ENCODE measurements at regions of chr7 and their contacts with region 1.

Region 1: DNA sequence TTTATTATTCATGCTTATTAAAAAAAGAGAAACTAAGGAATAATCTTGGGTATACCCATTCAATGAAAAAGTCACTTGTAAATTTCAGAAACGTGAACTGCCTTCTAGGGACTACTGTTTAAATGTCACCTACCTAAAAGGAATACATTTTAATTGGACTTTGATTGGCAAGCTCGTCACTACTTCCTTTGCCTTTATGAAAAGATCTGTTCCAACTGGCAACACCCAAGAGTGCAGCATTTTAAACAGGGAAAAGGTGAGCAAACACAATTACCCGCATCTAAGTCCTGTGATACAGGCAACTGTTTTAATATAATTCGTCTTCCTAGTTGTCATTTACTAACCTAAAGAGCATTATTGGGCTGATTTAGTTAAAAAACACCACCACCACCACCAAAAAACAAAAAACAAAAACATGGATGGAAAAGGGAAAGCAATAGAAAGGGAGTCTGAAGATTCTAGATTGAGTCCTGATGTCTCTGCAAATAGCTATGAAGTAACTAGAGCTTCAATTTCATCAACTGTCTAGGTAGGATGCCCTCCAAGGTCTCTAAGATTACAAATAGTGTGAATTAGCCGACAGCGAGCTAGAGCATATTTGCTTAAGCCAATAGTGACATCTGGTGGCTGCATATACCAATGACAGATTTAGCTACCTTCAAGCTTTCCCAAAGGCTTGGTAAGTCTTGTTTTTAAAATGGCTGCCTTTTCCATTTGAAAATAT is 33.8 kb upstream of the ICA1 start:
- DNase-seq: peak in 7 of 9 donors; percentile 28 to 58 (median 44)
- ATAC-seq: peak; percentile 91
- H3K4me3 ChIP-seq: no peak overlapping the region
- H3K4me3 Mint-ChIP-seq: no peak overlapping the region
- H3K27ac ChIP-seq: no peak overlapping the region
- H3K27ac Mint-ChIP-seq: peak overlapping the region in 1 of 9 donors; percentile 48
- H3K4me1 ChIP-seq: no peaks in the 10 kb centered on the region
- H3K4me1 Mint-ChIP-seq: peaks cover 0 to 3% (median 0%) of the 10 kb centered on the region in 7 donors
- H3K27me3 ChIP-seq: no peaks in the 10 kb centered on the region
- H3K27me3 Mint-ChIP-seq: peaks cover 0 to 22% (median 12%) of the 10 kb centered on the region in 5 donors

Region 2: GRCh38 chr7:6516387-6516983 is 1779.3 kb before region 1 on chr7:
- CTCF ChIA-PET with region 1: no interaction called
- POLR2A ChIA-PET with region 1: no interaction called
- intact Hi-C with region 1: loop called in 1 of 2 experiments (anchors 2 kb)
- DNase-seq: peak; percentile 34 to 69 (median 56)
- ATAC-seq: peak; percentile 82
- H3K4me3 ChIP-seq: peak overlapping the region; percentile 64
- H3K4me3 Mint-ChIP-seq: peak overlapping the region; percentile 79 to 87 (median 84)
- H3K27ac ChIP-seq: no peak overlapping the region
- H3K27ac Mint-ChIP-seq: peak overlapping the region in 2 of 9 donors; percentile 38 to 70
- H3K4me1 ChIP-seq: no peaks in the 10 kb centered on the region
- H3K4me1 Mint-ChIP-seq: peaks cover 6 to 11% (median 9%) of the 10 kb centered on the region in 7 donors
- H3K27me3 ChIP-seq: no peaks in the 10 kb centered on the region
- H3K27me3 Mint-ChIP-seq: peaks cover 0 to 4% (median 0%) of the 10 kb centered on the region in 5 donors

Region 3: DNA sequence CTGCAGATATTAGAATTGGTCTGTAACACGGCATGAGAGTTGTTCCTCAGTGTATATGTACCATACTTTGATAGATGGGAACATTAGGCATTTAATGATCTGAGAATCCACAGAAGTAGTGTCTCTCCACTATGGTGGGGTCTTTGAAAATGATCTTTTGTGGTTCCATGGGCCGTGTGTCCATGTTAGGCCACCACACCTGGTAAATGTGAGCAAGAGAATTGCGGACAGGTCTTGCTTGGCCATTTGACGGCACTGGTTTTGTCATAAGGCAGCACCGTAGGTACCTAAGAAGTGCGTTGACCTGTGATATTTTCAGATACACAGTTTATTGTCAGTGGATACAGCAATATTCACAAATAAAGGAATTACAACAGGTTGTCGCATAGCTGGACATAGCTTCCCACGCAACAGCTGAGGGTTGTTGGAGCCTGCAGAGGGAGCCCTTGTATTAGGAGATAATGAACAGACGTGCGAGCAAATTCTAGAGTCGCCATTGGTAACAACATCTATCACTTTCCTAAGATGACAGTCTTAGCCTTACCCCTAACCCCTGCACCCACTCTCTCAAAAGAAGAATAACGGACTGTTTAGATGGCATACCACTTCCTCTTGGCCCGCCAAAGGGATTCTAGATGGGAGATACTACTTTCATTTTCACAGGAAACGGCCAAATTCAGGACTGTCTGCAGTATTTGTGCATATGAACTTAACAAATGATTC is 871.5 kb before region 1 on chr7:
- CTCF ChIA-PET with region 1: no interaction called
- POLR2A ChIA-PET with region 1: no interaction called
- intact Hi-C with region 1: loop called in 1 of 2 experiments (anchors 10 kb)
- DNase-seq: peak in 6 of 9 donors; percentile 8 to 44 (median 25)
- ATAC-seq: peak; percentile 73
- H3K4me3 ChIP-seq: peak overlapping the region; percentile 59
- H3K4me3 Mint-ChIP-seq: peak overlapping the region in 8 of 10 donors; percentile 74 to 89 (median 82)
- H3K27ac ChIP-seq: no peak overlapping the region
- H3K27ac Mint-ChIP-seq: peak overlapping the region in 7 of 9 donors; percentile 9 to 80 (median 48)
- H3K4me1 ChIP-seq: no peaks in the 10 kb centered on the region
- H3K4me1 Mint-ChIP-seq: peaks cover 0 to 12% (median 5%) of the 10 kb centered on the region in 7 donors
- H3K27me3 ChIP-seq: no peaks in the 10 kb centered on the region
- H3K27me3 Mint-ChIP-seq: no peaks in the 10 kb centered on the region

Region 4: GRCh38 chr7:7542251-7542835 is 753.5 kb before region 1 on chr7:
- CTCF ChIA-PET with region 1: no interaction called
- POLR2A ChIA-PET with region 1: no interaction called
- intact Hi-C with region 1: loop called in 1 of 2 experiments (anchors 5 kb)
- DNase-seq: no peak
- ATAC-seq: no peak
- H3K4me3 ChIP-seq: no peak overlapping the region
- H3K4me3 Mint-ChIP-seq: no peak overlapping the region
- H3K27ac ChIP-seq: no peak overlapping the region
- H3K27ac Mint-ChIP-seq: no peak overlapping the region
- H3K4me1 ChIP-seq: no peaks in the 10 kb centered on the region
- H3K4me1 Mint-ChIP-seq: peaks cover 0 to 5% (median 0%) of the 10 kb centered on the region in 7 donors
- H3K27me3 ChIP-seq: no peaks in the 10 kb centered on the region
- H3K27me3 Mint-ChIP-seq: peaks cover 0 to 11% (median 5%) of the 10 kb centered on the region in 5 donors

Region 5: DNA sequence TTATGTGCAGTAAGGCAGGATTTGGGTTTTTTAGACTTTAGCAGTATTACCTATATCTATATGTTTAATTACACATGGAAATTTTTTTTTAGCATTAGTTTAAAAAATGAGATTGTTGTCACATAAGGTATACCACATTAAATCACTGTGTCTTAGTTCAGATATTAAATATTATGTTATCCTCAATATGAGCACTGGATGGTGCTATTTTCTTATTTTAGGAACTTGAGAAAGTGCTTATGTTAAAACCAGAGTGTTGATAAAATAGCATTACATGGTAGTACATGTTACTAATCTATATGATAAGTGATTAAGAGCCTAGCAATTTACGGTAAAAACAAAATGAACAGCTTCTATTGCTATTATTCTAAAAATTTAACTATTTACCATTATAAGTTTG is 700.3 kb before region 1 on chr7:
- CTCF ChIA-PET with region 1: interaction called, 7 read pairs
- POLR2A ChIA-PET with region 1: no interaction called
- intact Hi-C with region 1: loop called (anchors 1 to 5 kb)
- DNase-seq: peak in 6 of 9 donors; percentile 14 to 45 (median 36)
- ATAC-seq: peak; percentile 65
- H3K4me3 ChIP-seq: no peak overlapping the region
- H3K4me3 Mint-ChIP-seq: no peak overlapping the region
- H3K27ac ChIP-seq: no peak overlapping the region
- H3K27ac Mint-ChIP-seq: no peak overlapping the region
- H3K4me1 ChIP-seq: peaks cover 0 to 3% of the 10 kb centered on the region in 2 donors
- H3K4me1 Mint-ChIP-seq: no peaks in the 10 kb centered on the region
- H3K27me3 ChIP-seq: no peaks in the 10 kb centered on the region
- H3K27me3 Mint-ChIP-seq: no peaks in the 10 kb centered on the region

Region 6: DNA sequence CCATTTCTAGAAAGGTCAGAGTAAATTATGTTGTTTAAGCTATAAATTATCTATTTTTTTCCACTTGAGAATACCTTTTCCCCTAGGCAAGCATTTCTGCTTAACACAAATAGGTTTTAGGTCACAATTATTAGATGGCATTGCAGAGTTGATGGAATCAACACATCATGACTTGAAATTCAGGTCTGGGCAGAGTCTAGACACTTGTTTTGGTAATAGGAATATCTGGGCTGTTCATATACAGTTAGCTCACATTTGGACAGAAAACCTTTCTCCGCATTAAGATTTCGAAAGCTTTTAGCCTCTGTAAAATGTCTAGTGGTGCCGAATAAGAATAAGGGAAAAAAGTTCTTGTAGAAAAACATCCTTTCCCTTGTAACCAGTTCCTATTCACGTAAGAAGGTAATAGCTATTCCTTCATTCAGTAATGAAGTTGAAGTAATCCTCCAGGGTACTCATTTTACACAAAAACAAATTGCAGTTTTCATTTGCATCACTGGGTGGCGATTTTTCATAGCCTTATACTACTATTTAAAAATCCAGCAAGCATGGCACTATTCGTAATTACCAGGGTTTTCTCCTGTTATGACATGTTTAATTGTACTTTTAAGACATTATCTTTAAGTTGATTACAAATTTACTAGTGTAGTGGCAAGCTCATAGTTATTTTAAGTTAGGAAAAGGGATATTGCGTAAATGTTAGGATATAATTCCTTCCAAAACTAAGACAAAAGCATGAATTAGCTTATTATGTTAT is 614.4 kb before region 1 on chr7:
- CTCF ChIA-PET with region 1: no interaction called
- POLR2A ChIA-PET with region 1: no interaction called
- intact Hi-C with region 1: loop called (anchors 1 kb)
- DNase-seq: peak in 7 of 9 donors; percentile 37 to 66 (median 58)
- ATAC-seq: peak; percentile 84
- H3K4me3 ChIP-seq: no peak overlapping the region
- H3K4me3 Mint-ChIP-seq: peak overlapping the region in 5 of 10 donors; percentile 8 to 56 (median 25)
- H3K27ac ChIP-seq: no peak overlapping the region
- H3K27ac Mint-ChIP-seq: peak overlapping the region; percentile 1 to 76 (median 18)
- H3K4me1 ChIP-seq: peaks cover 0 to 15% of the 10 kb centered on the region in 2 donors
- H3K4me1 Mint-ChIP-seq: peaks cover 11 to 48% (median 37%) of the 10 kb centered on the region in 7 donors
- H3K27me3 ChIP-seq: no peaks in the 10 kb centered on the region
- H3K27me3 Mint-ChIP-seq: no peaks in the 10 kb centered on the region

Region 7: GRCh38 chr7:8217200-8218068 is 78.4 kb before region 1 on chr7:
- CTCF ChIA-PET with region 1: no interaction called
- POLR2A ChIA-PET with region 1: no interaction called
- intact Hi-C with region 1: loop called (anchors 5 kb)
- DNase-seq: peak in 7 of 9 donors; percentile 42 to 76 (median 68)
- ATAC-seq: peak; percentile 84
- H3K4me3 ChIP-seq: no peak overlapping the region
- H3K4me3 Mint-ChIP-seq: no peak overlapping the region
- H3K27ac ChIP-seq: no peak overlapping the region
- H3K27ac Mint-ChIP-seq: peak overlapping the region in 1 of 9 donors; percentile 22
- H3K4me1 ChIP-seq: no peaks in the 10 kb centered on the region
- H3K4me1 Mint-ChIP-seq: peaks cover 0 to 16% (median 3%) of the 10 kb centered on the region in 7 donors
- H3K27me3 ChIP-seq: no peaks in the 10 kb centered on the region
- H3K27me3 Mint-ChIP-seq: no peaks in the 10 kb centered on the region

Measured in naive thymus-derived CD4-positive, alpha-beta T cell (primary cell).